RWPE1 (cell line): ENCODE measurements at regions of chr7 and their contacts with region 1.

Region 1: GRCh38 chr7:100655908-100656674 is at the start of gene ACTL6B:
- DNase-seq: peak; percentile 73
- H3K27ac ChIP-seq: no peak within 1 kb of the TSS
- CTCF ChIP-seq: no peak

Region 2: DNA sequence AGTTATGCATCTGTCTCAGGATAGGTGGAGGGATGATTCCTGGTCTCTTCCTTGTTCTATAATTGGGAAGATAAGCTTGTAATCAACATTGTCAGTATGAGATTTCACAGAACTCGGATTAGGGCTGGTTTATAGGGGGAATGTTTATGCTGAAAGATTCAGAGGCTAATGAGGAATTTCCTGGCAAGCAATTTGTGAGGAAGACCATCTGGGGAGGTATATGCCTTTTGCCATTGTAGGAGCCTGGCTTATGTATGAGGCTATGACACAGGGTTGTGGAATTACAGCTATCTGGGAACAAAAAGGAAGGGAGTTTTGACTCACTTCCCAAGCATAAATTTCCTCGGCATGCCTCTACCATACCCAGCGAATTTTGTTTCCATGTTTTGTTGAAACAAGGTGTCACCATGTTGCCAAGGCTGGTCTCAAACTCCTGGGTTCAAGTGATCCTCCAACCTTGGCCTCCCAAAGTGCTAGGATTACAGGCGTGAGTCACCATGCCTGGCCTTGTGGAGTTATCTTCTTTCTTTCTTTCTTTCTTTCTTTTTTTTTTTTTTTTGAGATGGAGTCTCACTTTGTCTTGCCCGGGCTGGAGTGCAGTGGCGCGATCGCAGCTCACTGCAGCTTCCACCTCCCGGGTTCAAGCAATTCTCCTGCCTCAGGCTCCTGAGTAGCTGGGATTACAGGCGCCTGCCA is 568.9 kb before region 1 on chr7:
- CTCF ChIA-PET with region 1: no interaction called
- POLR2A ChIA-PET with region 1: interaction called, 10 read pairs
- DNase-seq: peak; percentile 70
- H3K27ac ChIP-seq: peak overlapping the region; percentile 85
- CTCF ChIP-seq: no peak

Region 3: GRCh38 chr7:100773491-100773890 is 117.4 kb after region 1 on chr7:
- CTCF ChIA-PET with region 1: no interaction called
- POLR2A ChIA-PET with region 1: no interaction called
- DNase-seq: no peak
- H3K27ac ChIP-seq: no peak overlapping the region
- CTCF ChIP-seq: no peak